B cell (primary cell): ENCODE measurements at regions of chr7 and their contacts with region 1.

Region 1: GRCh38 chr7:87600130-87601124 is at the start of gene ABCB1:
- DNase-seq: peak; percentile 68
- ATAC-seq: peak; percentile 62
- H3K4me3 ChIP-seq: peak within 1 kb of the TSS; percentile 46 to 83 (median 73)
- H3K4me3 Mint-ChIP-seq: peak within 1 kb of the TSS; percentile 78
- H3K27ac ChIP-seq: peak within 1 kb of the TSS; percentile 49 to 67
- H3K27ac Mint-ChIP-seq: peak within 1 kb of the TSS; percentile 82
- H3K4me1 ChIP-seq: peaks cover 17 to 23% of the 10 kb centered on the region in 2 donors
- H3K4me1 Mint-ChIP-seq: peaks cover 22% of the 10 kb centered on the region
- H3K27me3 ChIP-seq: peaks cover 0 to 11% (median 3%) of the 10 kb centered on the region in 4 experiments
- H3K27me3 Mint-ChIP-seq: peaks cover 32% of the 10 kb centered on the region
- CTCF ChIP-seq: no peak
- total RNA-seq, gene ABCB1: 21.7 and 27.7 TPM in 2 replicates

Region 2: DNA sequence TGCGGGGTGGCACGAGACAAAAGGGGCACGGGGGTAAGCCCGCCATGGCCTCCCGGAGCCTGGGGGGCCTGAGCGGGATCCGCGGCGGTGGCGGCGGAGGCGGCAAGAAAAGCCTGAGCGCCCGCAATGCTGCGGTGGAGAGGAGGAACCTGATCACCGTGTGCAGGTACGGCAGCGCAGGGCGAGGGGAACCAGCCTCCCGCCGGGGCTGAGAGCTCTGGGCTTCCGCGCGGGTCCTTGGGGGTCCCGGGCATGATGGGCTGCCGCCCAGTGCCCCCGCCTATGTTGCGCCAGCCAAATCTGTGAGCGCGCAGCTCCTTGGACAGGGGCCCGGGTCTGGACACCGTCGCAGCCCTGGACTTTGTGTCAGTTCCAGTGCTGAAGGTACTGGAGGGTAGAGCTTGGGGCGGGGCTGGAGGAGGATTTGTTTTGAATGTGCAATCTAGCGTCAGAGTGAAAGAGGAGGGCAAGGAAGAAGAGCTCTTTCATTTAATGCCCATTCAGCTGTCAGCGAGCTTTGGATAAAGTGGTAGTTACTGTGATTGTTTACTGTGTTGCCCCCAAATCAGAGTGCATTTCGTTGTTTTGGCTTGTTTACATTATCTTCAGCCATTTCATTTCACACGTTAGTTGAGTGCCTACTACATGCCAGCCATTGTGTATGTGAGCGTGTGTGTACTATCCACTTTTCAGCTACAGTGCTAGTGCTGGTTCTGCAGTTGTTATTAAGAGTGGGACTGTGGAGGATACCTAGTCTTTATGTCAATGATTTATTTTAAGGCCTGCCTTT is 28.5 kb after region 1 on chr7:
- CTCF ChIA-PET with region 1: interaction called, 7 read pairs
- POLR2A ChIA-PET with region 1: interaction called, 6 read pairs
- intact Hi-C with region 1: loop called (anchors 1 kb)
- DNase-seq: peak; percentile 66
- ATAC-seq: peak; percentile 18
- H3K4me3 ChIP-seq: peak overlapping the region in 4 of 5 experiments; percentile 59 to 80 (median 70)
- H3K4me3 Mint-ChIP-seq: peak overlapping the region; percentile 82
- H3K27ac ChIP-seq: no peak overlapping the region
- H3K27ac Mint-ChIP-seq: no peak overlapping the region
- H3K4me1 ChIP-seq: peaks cover 13 to 17% of the 10 kb centered on the region in 2 donors
- H3K4me1 Mint-ChIP-seq: peaks cover 17% of the 10 kb centered on the region
- H3K27me3 ChIP-seq: peaks cover 0 to 19% (median 8%) of the 10 kb centered on the region in 4 experiments
- H3K27me3 Mint-ChIP-seq: peaks cover 19% of the 10 kb centered on the region
- CTCF ChIP-seq: no peak

Region 3: GRCh38 chr7:87759511-87759910 is 159.1 kb after region 1 on chr7:
- CTCF ChIA-PET with region 1: no interaction called
- POLR2A ChIA-PET with region 1: no interaction called
- intact Hi-C with region 1: no loop called
- DNase-seq: no peak
- ATAC-seq: no peak
- H3K4me3 ChIP-seq: no peak overlapping the region
- H3K4me3 Mint-ChIP-seq: no peak overlapping the region
- H3K27ac ChIP-seq: no peak overlapping the region
- H3K27ac Mint-ChIP-seq: no peak overlapping the region
- H3K4me1 ChIP-seq: no peaks in the 10 kb centered on the region
- H3K4me1 Mint-ChIP-seq: no peaks in the 10 kb centered on the region
- H3K27me3 ChIP-seq: no peaks in the 10 kb centered on the region
- H3K27me3 Mint-ChIP-seq: peaks cover 7% of the 10 kb centered on the region
- CTCF ChIP-seq: no peak